K562 (cell line): ENCODE measurements at regions of chr2 and their contacts with region 1.

Region 1: DNA sequence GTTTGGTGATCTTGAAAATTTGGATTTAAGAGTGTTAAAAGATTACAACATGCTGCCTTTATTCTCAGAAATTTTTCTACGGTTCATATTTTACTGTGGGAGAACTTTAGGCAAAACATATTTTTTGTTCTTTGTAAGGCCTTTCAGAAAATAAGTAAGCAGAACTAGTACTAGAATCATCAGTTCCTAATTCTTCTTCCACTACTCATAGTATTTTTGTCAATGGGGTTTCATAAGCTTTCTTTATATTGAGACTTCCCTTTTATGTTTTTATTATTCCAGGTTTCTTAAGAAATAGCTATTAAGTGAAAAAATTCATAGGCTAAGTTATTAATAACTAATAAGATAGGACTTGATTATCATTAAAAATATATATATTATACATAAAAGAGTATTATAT is 12.4 kb downstream of the UGGT1 start:
- DNase-seq: no peak
- ATAC-seq: no peak
- H3K4me3 ChIP-seq: no peak overlapping the region
- H3K27ac ChIP-seq: no peak overlapping the region
- H3K4me1 ChIP-seq: no peaks in the 10 kb centered on the region; a peak in 1 of 5 replicates
- H3K27me3 ChIP-seq: no peaks in the 10 kb centered on the region
- CTCF ChIP-seq: no peak
- EP300 ChIP-seq: no peak
- POLR2A ChIP-seq: no peak
- RAD21 ChIP-seq: no peak

Region 2: DNA sequence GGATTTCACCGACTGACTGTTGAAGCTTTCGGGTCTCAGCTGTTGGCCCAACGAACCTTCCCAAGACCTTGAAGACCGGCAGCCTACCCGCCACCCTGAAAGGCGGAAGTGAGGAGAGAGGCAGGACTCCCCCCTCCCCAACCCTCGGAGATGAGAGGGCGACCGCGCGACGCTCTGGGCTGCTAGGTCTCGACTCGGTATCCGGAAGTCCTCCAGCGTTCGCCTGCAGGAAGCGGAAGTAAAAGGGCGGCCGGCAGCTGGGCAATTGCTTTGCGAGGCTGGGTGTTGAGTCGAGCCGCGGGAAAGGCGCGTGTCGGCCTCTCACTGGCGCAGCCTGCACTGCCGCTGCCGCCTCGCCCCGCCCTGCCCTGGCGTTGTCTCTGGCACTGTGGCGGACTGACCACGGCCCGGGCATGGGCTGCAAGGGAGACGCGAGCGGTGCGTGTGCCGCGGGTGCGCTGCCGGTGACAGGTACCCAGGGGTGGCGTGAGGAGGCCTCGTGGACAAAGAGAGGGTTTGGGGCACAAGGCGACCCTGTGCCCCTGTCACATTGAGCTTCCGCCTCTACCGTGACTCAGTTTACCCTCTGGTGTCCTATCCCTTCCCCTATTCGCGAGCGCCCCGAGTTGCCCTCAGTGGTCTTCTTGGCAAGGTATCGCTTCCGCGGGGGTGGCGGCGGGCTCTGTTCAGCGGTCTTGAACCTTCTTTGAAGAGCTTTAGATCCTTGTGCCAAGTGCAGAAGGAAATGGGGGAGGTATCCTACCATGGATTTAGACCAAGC is 12.3 kb before region 1 on chr2 and contains the start of gene UGGT1:
- CTCF ChIA-PET with region 1: no interaction called
- POLR2A ChIA-PET with region 1: interaction called, 30 read pairs
- in situ Hi-C with region 1: no loop called
- intact Hi-C with region 1: no loop called
- DNase-seq: peak; percentile 90 to 98 (median 93)
- ATAC-seq: peak; percentile 95
- H3K4me3 ChIP-seq: peak within 1 kb of the TSS; percentile 89
- H3K27ac ChIP-seq: peak within 1 kb of the TSS; percentile 92
- H3K4me1 ChIP-seq: peaks cover 16 to 20% of the 10 kb centered on the region in 2 experiments; a peak in 4 of 5 replicates
- H3K27me3 ChIP-seq: no peaks in the 10 kb centered on the region
- CTCF ChIP-seq: no peak
- EP300 ChIP-seq: no peak; the same call in 1 of the 2 replicates
- POLR2A ChIP-seq: peak; percentile 94
- RAD21 ChIP-seq: no peak
- polyA plus RNA-seq, gene UGGT1: 5.1 to 7.1 TPM